ENCODE measurements at regions of chr17 and their contacts with region 1.

Region 1: DNA sequence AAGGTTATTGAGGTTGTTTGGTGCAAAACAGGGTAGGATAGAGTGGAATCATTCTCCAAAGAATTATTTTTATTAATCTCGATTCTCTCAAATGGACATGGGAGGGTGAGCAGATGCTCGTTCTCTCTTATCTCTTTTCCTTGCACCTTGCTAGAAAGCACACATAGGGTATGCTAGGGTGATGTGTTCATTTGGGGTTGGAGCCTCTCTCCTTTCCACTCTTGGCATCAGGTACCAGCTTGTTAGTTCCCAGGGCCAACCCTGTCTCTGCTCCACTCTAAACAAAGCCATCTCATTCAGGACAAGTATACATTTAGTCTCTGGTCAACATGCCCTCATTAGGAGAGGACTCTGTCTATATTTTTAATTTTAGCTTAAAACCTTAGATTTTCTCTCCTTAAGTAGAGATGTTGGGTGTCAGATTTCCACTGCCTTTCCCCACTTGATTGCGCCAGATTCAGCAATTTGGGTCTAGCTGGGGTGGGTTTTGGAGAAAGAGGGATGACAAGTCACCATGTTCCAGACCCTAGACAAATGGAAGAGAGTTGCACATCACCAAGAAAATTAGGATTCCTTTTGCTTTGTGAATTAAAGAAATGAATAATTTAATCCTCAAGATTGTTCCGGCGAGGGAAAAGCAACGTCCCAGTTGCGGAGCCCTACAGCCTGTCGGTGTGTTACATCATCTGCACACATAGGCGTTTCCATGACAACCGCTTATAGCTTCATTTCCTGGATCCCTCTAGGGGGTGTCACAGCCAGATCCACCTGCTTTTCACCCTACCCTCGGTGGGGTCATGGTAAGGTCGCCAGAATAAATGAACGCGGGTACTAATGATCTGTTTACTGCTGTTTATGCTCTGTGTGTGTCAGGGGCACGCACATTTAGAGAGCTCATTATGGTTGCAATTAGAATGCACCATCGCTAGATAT is 41.6 kb downstream of the SNX11 start:
- DNase-seq: no peak
- ATAC-seq: no peak
- H3K4me3 ChIP-seq: no peak overlapping the region
- H3K27ac ChIP-seq: no peak overlapping the region
- H3K4me1 ChIP-seq: no peaks in the 10 kb centered on the region
- H3K27me3 ChIP-seq: peaks cover 6% of the 10 kb centered on the region

Region 2: GRCh38 chr17:48012151-48012520 is 137.0 kb before region 1 on chr17:
- intact Hi-C with region 1: no loop called
- DNase-seq: peak; percentile 46 to 79 (median 77)
- ATAC-seq: peak; percentile 51 to 59
- H3K4me3 ChIP-seq: peak overlapping the region; percentile 50
- H3K27ac ChIP-seq: no peak overlapping the region
- H3K4me1 ChIP-seq: no peaks in the 10 kb centered on the region
- H3K27me3 ChIP-seq: no peaks in the 10 kb centered on the region

Region 3: GRCh38 chr17:48113201-48113676 is 35.9 kb before region 1 on chr17:
- intact Hi-C with region 1: no loop called
- DNase-seq: peak in 2 of 3 donors; percentile 66 to 68
- ATAC-seq: peak in 1 of 2 donors; percentile 36
- H3K4me3 ChIP-seq: no peak overlapping the region
- H3K27ac ChIP-seq: peak overlapping the region; percentile 37
- H3K4me1 ChIP-seq: no peaks in the 10 kb centered on the region
- H3K27me3 ChIP-seq: no peaks in the 10 kb centered on the region

Region 4: DNA sequence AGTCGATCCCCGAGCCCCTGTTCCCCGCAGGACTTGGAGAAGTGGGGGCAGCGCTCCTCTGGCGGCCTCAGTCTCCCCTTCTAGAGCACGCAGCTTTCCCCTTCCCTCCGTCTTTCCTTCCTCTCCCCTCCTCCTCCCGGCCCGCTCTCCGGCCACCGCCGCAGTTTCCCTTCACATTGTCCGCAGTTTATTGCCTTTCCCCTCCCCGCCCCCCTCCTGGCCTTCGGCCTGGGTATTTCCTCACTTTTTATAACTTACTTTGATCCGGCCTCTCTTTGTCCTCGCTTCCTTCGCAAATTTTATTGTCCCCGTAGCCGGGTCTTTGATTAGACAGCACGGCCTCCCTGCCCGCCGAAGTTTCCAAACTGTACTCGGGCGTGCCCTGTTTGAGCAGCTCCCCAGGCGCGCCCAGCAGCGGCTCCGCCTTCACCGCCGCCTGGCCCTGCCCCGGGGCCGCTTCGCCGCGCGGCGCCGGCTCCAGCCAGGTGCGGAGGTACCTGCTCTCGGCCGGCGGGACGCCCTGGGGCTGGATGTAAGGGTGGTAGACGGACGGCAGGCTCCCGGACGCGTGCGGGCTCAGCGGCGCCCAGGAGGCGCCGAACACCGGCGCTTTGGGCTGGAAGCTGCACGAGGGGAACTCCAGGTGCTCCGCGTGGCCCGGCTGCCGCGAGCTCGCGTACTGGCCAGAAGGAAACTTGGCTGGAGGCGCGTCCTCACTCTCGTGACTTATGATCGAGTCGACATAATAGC is 476.6 kb after region 1 on chr17:
- intact Hi-C with region 1: loop called in 1 of 4 experiments (anchors 10 kb)
- DNase-seq: no peak
- ATAC-seq: peak; percentile 44 to 59
- H3K4me3 ChIP-seq: peak overlapping the region; percentile 38
- H3K27ac ChIP-seq: no peak overlapping the region
- H3K4me1 ChIP-seq: peaks cover 3% of the 10 kb centered on the region
- H3K27me3 ChIP-seq: no peaks in the 10 kb centered on the region